ENCODE measurements at regions of chr12 and their contacts with region 1.

Region 1: DNA sequence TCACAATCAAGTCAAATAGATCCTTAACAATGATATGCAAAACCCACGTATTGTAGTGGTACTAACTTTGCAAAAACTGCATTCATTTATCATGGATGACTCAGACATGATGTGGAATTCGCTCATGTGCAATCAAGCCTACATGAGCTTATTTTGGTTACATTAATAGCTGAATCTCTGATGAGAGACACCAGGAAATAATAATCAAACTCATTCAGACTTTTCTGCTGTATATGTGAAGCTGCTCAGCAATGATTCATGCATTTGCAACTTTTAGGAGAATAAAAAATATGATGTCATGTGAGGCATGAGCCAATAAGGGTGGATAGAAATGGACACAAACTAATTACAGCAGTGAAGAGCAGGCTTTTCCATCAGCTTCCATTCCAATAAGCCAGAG is 1075.8 kb upstream of the TMEM132C start:
- DNase-seq: peak; percentile 77
- H3K4me3 ChIP-seq: no peak overlapping the region
- H3K27ac ChIP-seq: no peak overlapping the region
- H3K4me1 ChIP-seq: peaks cover 29% of the 10 kb centered on the region
- H3K27me3 ChIP-seq: no peaks in the 10 kb centered on the region
- CTCF ChIP-seq: no peak

Region 2: GRCh38 chr12:127165567-127166392 is 25.3 kb before region 1 on chr12:
- CTCF ChIA-PET with region 1: no interaction called
- dilution Hi-C with region 1: no loop called
- in situ Hi-C with region 1: no loop called
- intact Hi-C with region 1: loop called (anchors 2 kb)
- DNase-seq: peak; percentile 78
- H3K4me3 ChIP-seq: peak overlapping the region in 2 of 3 experiments; percentile 41 to 55
- H3K27ac ChIP-seq: peak overlapping the region; percentile 69
- H3K4me1 ChIP-seq: peaks cover 27% of the 10 kb centered on the region
- H3K27me3 ChIP-seq: no peaks in the 10 kb centered on the region
- CTCF ChIP-seq: no peak

Region 3: GRCh38 chr12:127257366-127257935 is 66.3 kb after region 1 on chr12:
- CTCF ChIA-PET with region 1: no interaction called
- dilution Hi-C with region 1: no loop called
- in situ Hi-C with region 1: no loop called
- intact Hi-C with region 1: no loop called
- DNase-seq: peak; percentile 31
- H3K4me3 ChIP-seq: no peak overlapping the region
- H3K27ac ChIP-seq: peak overlapping the region; percentile 35
- H3K4me1 ChIP-seq: peaks cover 11% of the 10 kb centered on the region
- H3K27me3 ChIP-seq: no peaks in the 10 kb centered on the region
- CTCF ChIP-seq: no peak